ENCODE measurements at regions of chr1 and their contacts with region 1.

Region 1: GRCh38 chr1:43073490-43074230 is 98.4 kb downstream of the EBNA1BP2 start:
- DNase-seq: peak; percentile 86

Region 2: GRCh38 chr1:42576935-42577334 is 496.7 kb before region 1 on chr1:
- intact Hi-C with region 1: loop called in 1 of 2 experiments (anchors 10 kb)
- DNase-seq: no peak

Region 3: GRCh38 chr1:42913426-42914091 is 160.1 kb before region 1 on chr1:
- intact Hi-C with region 1: loop called (anchors 5 kb)
- DNase-seq: no peak

Region 4: GRCh38 chr1:43152866-43153265 is 79.2 kb after region 1 on chr1:
- intact Hi-C with region 1: no loop called
- DNase-seq: no peak